ENCODE measurements at regions of chr19 and their contacts with region 1.

Region 1: GRCh38 chr19:58543826-58544590 is at the start of gene TRIM28:
- DNase-seq: peak; percentile 99
- H3K4me3 ChIP-seq: peak within 1 kb of the TSS; percentile 74 to 98 (median 97)
- H3K27ac ChIP-seq: peak within 1 kb of the TSS; percentile 86 to 98 (median 97)
- H3K4me1 ChIP-seq: peaks cover 0 to 34% (median 26%) of the 10 kb centered on the region in 4 donors
- H3K27me3 ChIP-seq: peaks cover 0 to 8% (median 0%) of the 10 kb centered on the region in 3 donors
- CTCF ChIP-seq: peak in 1 of 4 experiments; percentile 15
- EP300 ChIP-seq: peak in 1 of 4 donors; percentile 69
- POLR2A ChIP-seq: peak; percentile 94 to 98
- total RNA-seq, gene TRIM28: 157 to 236 (median 207) TPM

Region 2: DNA sequence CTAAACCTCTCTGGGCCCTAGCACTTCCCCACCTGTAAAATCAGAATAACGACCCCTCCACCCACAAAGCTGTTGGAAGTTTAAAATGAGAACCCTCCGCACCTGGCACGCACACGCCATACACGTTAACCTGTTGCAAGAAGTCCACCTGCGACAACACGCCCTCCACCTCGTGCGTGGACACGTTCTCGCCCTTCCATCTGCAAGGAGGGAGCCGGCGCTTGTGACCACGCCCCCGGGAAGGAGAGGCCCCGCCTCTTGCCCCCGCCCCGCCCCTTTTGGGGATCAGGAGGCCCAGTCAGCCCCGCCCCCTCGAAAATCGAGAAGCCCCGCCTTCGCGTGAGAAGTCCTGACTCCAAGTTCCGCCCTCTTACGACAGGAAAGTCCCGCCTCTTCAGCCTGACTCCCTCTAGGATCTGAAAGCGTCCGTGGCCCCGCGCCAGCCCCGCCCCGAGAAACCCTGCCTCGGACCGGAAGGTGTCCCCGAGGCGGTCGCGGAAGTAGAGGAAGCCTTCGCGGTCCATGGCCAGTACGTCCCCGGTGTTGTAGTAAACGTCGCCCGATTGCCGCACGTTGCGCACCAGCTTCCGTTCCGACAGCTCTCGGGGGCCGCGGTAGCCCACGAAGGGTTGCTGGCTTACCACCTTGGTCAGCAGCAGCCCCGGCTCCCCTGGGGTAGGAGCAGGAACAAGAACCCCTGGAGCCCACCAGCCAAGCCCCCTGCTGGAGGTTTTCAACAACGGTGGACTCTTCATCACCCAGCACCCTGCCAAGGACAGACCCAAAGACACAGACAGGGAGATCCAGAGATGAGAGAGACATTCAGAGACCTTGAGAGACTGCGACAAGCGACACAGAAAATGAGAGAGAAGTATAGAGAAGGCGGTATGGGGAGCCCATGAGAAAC is 44.7 kb before region 1 on chr19:
- intact Hi-C with region 1: no loop called
- DNase-seq: peak; percentile 100
- H3K4me3 ChIP-seq: peak overlapping the region; percentile 48 to 60 (median 54)
- H3K27ac ChIP-seq: peak overlapping the region; percentile 76 to 85 (median 80)
- H3K4me1 ChIP-seq: peaks cover 0 to 23% (median 20%) of the 10 kb centered on the region in 4 donors
- H3K27me3 ChIP-seq: no peaks in the 10 kb centered on the region
- CTCF ChIP-seq: no peak
- EP300 ChIP-seq: no peak
- POLR2A ChIP-seq: no peak

Region 3: GRCh38 chr19:58519355-58520256 is 24.4 kb before region 1 on chr19 and contains the start of gene ZBTB45:
- intact Hi-C with region 1: loop called (anchors 1 kb)
- DNase-seq: peak; percentile 97
- H3K4me3 ChIP-seq: peak within 1 kb of the TSS; percentile 74 to 75 (median 75)
- H3K27ac ChIP-seq: peak within 1 kb of the TSS; percentile 92 to 97 (median 96)
- H3K4me1 ChIP-seq: peaks cover 0 to 44% (median 40%) of the 10 kb centered on the region in 4 donors
- H3K27me3 ChIP-seq: no peaks in the 10 kb centered on the region
- CTCF ChIP-seq: peak; percentile 55 to 90 (median 75)
- EP300 ChIP-seq: peak in 1 of 4 donors; percentile 31
- POLR2A ChIP-seq: peak; percentile 48 to 65
- total RNA-seq, gene ZBTB45: 7.6 to 13.8 (median 8.4) TPM

Region 4: DNA sequence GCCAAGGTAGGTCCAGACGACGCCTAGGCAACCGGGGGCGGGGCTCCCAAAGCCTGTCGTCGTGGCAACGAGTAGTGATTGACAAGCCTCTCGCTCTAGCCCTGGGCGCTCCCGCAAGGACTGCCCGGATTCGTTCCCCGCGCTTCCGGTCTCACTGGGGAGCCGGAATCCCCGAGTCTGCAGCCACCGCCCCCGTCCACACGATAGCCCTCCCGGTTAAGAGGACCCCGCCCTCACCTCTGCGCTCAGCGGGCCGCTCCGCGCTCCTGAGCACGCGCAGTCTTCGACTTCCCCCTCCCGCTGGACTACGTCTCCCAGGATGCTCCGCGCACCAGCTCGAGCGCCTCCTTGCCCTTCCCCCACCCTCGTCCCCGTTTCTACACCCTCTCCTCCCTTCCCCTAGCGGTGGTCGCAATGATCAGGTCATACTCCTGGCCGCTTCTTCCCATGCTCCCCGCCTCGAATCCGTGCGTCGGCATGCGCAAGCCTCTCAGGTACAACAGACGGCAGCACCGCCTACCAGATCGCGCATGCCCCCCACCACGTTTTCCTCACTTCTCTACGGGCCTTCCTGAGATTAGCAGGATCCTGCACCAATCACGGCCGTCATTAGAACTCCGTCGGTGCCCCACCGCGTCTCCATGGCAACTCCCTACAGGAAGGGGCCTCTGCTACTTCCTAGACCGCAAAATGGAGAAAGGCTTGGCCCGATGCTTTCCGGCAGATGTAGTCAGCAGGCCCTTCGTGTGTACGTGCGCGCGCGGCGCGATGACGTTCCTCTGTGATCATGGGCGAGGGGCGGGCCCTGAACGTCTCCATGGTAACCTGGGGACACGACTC is 29.0 kb after region 1 on chr19 and contains the start of gene MZF1:
- intact Hi-C with region 1: loop called (anchors 2 kb)
- DNase-seq: peak; percentile 100
- H3K4me3 ChIP-seq: peak within 1 kb of the TSS; percentile 58 to 87 (median 70)
- H3K27ac ChIP-seq: peak within 1 kb of the TSS; percentile 92 to 99 (median 98)
- H3K4me1 ChIP-seq: peaks cover 0 to 46% (median 40%) of the 10 kb centered on the region in 4 donors
- H3K27me3 ChIP-seq: no peaks in the 10 kb centered on the region
- CTCF ChIP-seq: peak in 1 of 4 experiments; percentile 36
- EP300 ChIP-seq: peak in 1 of 4 donors; percentile 80
- POLR2A ChIP-seq: peak; percentile 6 to 44
- total RNA-seq, gene MZF1: 13.6 to 31.5 (median 20.1) TPM

Region 5: DNA sequence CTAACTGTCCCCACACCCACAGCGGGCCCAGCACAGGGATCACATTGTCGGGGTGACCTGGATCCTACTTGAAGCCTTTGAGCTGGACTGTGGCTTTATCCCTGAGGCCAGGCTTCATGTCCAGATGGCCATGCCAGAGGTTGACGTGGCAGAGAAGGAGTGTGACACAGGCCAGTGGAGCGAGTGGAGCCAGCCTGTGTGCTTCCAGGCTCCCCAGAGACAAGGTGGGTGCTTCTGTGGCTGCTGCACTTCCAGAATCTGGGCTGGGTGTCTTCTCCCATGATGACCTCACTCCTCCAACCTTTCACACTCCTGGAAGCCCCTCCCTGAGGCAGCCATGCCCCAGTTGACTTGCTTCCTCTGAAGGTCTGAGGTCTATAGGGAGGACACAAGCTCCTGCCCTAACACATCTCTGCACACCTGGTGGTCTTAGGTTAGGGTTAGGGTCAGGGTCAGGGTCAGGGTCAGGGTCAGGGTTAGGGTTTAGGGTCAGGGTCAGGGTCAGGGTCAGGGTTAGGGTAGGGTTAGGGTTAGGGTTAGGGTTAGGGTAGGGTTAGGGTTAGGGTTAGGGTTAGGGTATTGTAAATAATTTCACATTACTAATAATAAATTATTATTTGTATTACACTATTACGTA is 42.2 kb after region 1 on chr19:
- intact Hi-C with region 1: no loop called
- DNase-seq: peak; percentile 60
- H3K4me3 ChIP-seq: no peak overlapping the region
- H3K27ac ChIP-seq: no peak overlapping the region
- H3K4me1 ChIP-seq: peaks cover 0 to 8% (median 7%) of the 10 kb centered on the region in 4 donors
- H3K27me3 ChIP-seq: no peaks in the 10 kb centered on the region
- CTCF ChIP-seq: no peak
- EP300 ChIP-seq: no peak
- POLR2A ChIP-seq: no peak